Activated CD8-positive, alpha-beta memory T cell treated with anti-CD3 and anti-CD28 coated beads, Interleukin-2, amount 10 ng/mL, durations not matched to agents 7 days and 5 days (primary cell): ENCODE measurements at regions of chr6 and their contacts with region 1.

Region 1: GRCh38 chr6:90083891-90084290 is 189.6 kb downstream of the GJA10 start:
- DNase-seq: peak; percentile 77
- ATAC-seq: peak; percentile 28
- H3K4me3 Mint-ChIP-seq: peak overlapping the region; percentile 41
- H3K27ac Mint-ChIP-seq: peak overlapping the region; percentile 53
- H3K4me1 Mint-ChIP-seq: peaks cover 69% of the 10 kb centered on the region
- H3K27me3 Mint-ChIP-seq: peaks cover 51% of the 10 kb centered on the region

Region 2: GRCh38 chr6:90107771-90108282 is 23.9 kb after region 1 on chr6:
- CTCF ChIA-PET with region 1: interaction called, 16 read pairs
- DNase-seq: peak; percentile 63
- ATAC-seq: peak; percentile 56
- H3K4me3 Mint-ChIP-seq: no peak overlapping the region
- H3K27ac Mint-ChIP-seq: no peak overlapping the region
- H3K4me1 Mint-ChIP-seq: peaks cover 87% of the 10 kb centered on the region
- H3K27me3 Mint-ChIP-seq: peaks cover 10% of the 10 kb centered on the region